A549 (cell line): ENCODE measurements at regions of chr3 and their contacts with region 1.

Region 1: DNA sequence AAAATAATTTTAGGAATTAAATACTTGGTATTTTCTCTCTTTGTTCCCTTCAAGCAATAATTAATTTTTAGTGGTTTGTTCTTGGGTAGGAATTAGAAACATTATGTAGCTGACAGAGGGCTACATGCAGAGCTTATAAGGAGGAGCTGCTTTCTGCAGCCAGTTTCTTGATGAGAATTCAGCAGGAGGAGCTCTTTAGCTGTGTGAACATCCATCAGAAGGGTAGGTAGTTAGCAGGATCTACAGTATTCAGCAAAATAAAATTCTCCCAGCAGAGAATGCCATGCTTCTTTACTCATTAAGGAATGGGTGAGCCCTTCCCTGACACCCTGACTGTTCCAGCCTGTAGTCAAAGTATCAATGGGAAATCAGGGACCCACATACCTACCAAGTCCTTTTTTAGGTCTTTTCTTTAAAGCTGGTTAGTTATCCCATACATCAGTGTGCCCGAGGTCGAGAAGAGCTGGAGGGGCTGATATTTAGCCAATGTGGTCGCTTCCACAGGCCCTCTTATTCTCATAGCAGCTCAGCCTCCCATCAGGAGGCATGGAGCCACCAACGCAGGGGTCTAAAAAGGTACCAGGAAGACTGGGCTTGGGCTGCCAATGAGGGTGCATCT is 54.0 kb downstream of the KCNAB1 start:
- DNase-seq: peak in 1 of 2 experiments; percentile 34
- ATAC-seq: peak; percentile 50 to 75; a peak in 4 of 6 replicates
- H3K4me3 ChIP-seq: no peak overlapping the region
- H3K27ac ChIP-seq: no peak overlapping the region
- H3K4me1 ChIP-seq: no peaks in the 10 kb centered on the region
- CTCF ChIP-seq: 0 out of 3 replicates have a peak, but pooled peaks have one; percentile 15
- EP300 ChIP-seq: no peak
- POLR2A ChIP-seq: no peak
- RAD21 ChIP-seq: peak; percentile 16 to 45; a peak in 2 of 5 replicates

Region 2: GRCh38 chr3:155963570-155963969 is 210.8 kb before region 1 on chr3:
- CTCF ChIA-PET with region 1: no interaction called
- POLR2A ChIA-PET with region 1: no interaction called
- DNase-seq: no peak
- ATAC-seq: peak in 1 of 2 experiments; percentile 39; a peak in 2 of 6 replicates
- H3K4me3 ChIP-seq: no peak overlapping the region
- H3K27ac ChIP-seq: no peak overlapping the region
- H3K4me1 ChIP-seq: no peaks in the 10 kb centered on the region
- CTCF ChIP-seq: no peak
- EP300 ChIP-seq: no peak
- POLR2A ChIP-seq: no peak
- RAD21 ChIP-seq: no peak

Region 3: DNA sequence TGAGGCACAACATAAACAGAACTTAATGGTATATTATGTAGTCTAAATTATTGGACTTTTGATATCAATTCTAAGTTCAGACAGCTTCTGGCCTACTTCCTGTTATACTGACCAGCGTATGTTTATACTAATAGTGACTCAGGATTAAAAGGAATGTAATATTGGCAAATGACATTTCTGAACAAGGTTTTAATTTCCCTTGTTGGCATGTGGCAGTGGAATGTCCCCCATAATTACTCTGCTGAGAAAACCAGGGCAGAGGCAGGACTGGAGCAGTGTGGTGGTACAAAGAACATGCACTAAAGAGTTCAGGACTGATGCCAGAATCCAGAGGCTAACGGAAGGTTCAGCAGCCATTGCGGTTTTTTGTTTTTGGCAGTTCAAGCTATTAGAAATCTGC is 130.1 kb after region 1 on chr3:
- CTCF ChIA-PET with region 1: no interaction called
- POLR2A ChIA-PET with region 1: no interaction called
- DNase-seq: no peak
- ATAC-seq: no peak
- H3K4me3 ChIP-seq: no peak overlapping the region
- H3K27ac ChIP-seq: no peak overlapping the region
- H3K4me1 ChIP-seq: no peaks in the 10 kb centered on the region
- CTCF ChIP-seq: no peak
- EP300 ChIP-seq: no peak
- POLR2A ChIP-seq: no peak
- RAD21 ChIP-seq: no peak

Region 4: GRCh38 chr3:156341831-156342416 is 167.6 kb after region 1 on chr3:
- CTCF ChIA-PET with region 1: no interaction called
- POLR2A ChIA-PET with region 1: no interaction called
- DNase-seq: no peak
- ATAC-seq: no peak
- H3K4me3 ChIP-seq: no peak overlapping the region
- H3K27ac ChIP-seq: no peak overlapping the region
- H3K4me1 ChIP-seq: no peaks in the 10 kb centered on the region
- CTCF ChIP-seq: no peak
- EP300 ChIP-seq: no peak
- POLR2A ChIP-seq: no peak
- RAD21 ChIP-seq: no peak

Region 5: DNA sequence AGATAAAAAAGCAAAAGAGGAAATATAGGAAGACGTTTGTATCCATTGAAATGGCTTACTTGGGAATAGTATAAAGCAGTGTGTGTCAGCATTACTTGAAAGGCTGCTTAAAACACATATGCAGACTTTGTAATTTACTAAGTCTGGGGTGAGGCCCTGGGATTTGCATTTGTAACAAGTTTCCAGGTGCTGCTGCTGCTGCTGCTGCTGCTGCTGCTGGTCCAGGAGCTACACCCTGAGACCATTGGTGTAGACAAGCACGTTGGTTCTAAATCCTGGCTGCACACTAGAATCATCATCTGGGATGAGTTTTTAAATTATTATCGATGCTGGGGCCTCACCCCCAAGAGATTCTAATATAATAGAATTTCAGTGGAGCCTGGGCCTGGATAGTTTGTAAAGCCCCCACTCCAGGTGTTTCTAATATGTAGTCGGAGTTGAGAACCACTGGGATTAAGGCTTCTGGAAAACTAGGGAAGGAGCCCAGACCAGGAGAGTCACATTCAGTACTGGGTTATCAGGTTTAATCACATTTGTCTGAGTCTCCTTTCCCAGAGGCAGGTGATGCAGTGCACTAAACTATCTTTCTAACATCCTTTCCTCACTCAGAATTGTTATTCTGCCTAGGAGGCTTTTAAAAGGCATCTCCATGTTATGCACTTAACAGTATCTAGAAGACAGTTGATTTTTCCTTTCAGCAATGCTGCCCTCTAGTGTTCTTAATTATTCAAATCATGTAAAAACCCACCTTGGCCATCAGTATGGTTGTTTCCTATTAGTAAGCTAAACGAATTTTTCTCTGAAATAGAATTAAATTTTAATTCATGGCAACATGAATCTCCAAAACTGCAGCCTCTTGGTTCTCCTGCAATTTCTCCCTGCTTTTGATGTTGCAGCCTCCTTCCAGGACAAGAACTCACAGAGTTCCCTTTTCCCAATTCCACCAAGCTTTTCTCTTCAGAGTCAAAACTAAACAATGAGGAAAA is 335.1 kb after region 1 on chr3:
- CTCF ChIA-PET with region 1: interaction called, 17 read pairs
- POLR2A ChIA-PET with region 1: no interaction called
- DNase-seq: peak; percentile 51 to 63
- ATAC-seq: peak; percentile 78 to 93; a peak in 5 of 6 replicates
- H3K4me3 ChIP-seq: no peak overlapping the region
- H3K27ac ChIP-seq: no peak overlapping the region
- H3K4me1 ChIP-seq: peaks cover 11% of the 10 kb centered on the region
- CTCF ChIP-seq: peak; percentile 80
- EP300 ChIP-seq: no peak
- POLR2A ChIP-seq: no peak
- RAD21 ChIP-seq: peak; percentile 69 to 70